ENCODE measurements at regions of chr3 and their contacts with region 1.

Region 1: DNA sequence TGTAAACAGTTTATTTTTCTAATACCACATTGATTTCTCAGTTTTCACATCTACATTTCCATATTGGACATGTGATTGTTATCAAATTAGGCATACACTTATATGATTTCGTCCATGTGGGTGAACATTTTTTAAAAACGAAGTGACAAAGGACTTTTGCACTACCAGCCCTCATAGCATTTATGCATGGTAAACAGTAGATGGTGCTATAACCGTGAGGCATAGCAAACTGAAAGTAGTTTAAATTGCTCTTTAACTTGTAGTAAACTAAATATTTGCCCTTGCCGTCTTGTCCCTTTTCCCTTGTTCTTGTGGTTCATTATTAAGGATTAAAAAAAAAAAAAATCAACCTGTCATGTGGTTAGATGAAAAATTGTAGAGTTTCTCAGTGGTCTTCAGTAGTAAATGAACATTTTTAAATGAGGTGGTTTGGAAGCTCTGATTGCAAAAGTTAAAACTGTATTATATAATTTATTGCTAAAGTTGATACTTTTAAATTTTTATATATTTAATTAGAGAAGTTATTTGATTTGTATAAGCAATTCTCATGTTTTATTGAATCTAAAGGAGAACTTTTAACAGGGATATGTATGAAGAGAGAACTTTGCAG is 24.0 kb downstream of the STX19 start:
- DNase-seq: peak; percentile 67
- H3K4me3 ChIP-seq: no peak overlapping the region
- H3K27ac ChIP-seq: no peak overlapping the region
- H3K4me1 ChIP-seq: no peaks in the 10 kb centered on the region
- CTCF ChIP-seq: peak; percentile 98

Region 2: DNA sequence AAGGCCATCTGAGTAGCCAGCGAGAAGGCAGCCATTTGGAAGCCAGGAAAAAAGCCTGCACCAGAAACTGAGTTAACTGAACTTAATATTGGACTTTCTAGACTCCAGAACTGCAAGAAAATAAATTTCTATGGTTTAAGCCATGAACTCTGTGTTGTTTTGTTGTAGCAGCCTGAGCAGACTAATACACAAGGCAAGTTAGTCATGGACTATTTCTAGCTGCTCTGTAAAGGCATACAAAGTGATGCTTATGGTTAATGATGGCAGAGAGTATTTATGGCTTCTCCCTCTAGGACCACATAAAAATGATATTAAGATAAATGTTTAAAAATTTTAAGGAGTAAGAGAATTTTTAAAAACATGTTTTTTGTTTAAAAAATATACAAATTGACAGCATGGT is 67.9 kb before region 1 on chr3:
- CTCF ChIA-PET with region 1: no interaction called
- POLR2A ChIA-PET with region 1: no interaction called
- intact Hi-C with region 1: loop called (anchors 10 kb)
- DNase-seq: no peak
- H3K4me3 ChIP-seq: no peak overlapping the region
- H3K27ac ChIP-seq: no peak overlapping the region
- H3K4me1 ChIP-seq: no peaks in the 10 kb centered on the region
- CTCF ChIP-seq: no peak

Region 3: GRCh38 chr3:94336046-94336710 is 331.8 kb after region 1 on chr3:
- CTCF ChIA-PET with region 1: no interaction called
- POLR2A ChIA-PET with region 1: no interaction called
- intact Hi-C with region 1: no loop called
- DNase-seq: peak; percentile 1
- H3K4me3 ChIP-seq: no peak overlapping the region
- H3K27ac ChIP-seq: no peak overlapping the region
- H3K4me1 ChIP-seq: no peaks in the 10 kb centered on the region
- CTCF ChIP-seq: 0 out of 2 replicates have a peak, but pooled peaks have one; percentile 24

Region 4: DNA sequence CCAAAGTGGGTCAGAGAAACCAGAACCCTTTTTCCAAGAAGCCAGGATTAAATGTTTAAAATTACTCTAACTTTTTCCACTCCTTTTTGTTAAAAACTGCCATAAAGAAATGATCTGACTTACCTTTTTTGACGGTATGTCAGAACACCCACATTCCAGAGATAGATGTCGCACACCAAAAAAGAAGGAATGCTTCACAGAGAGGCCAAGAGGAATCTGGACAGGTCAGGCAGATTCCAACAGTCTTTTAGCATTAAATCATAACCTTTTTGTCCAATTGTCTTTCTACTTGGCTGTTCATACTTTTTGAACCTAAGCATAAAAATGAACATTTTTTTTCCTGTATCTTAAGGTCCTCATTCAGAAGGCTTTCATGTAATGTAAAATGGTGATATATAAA is 905.3 kb after region 1 on chr3:
- CTCF ChIA-PET with region 1: no interaction called
- POLR2A ChIA-PET with region 1: no interaction called
- intact Hi-C with region 1: no loop called
- DNase-seq: no peak
- H3K4me3 ChIP-seq: no peak overlapping the region
- H3K27ac ChIP-seq: no peak overlapping the region
- H3K4me1 ChIP-seq: no peaks in the 10 kb centered on the region
- CTCF ChIP-seq: no peak